Naive thymus-derived CD8-positive, alpha-beta T cell (primary cell): ENCODE measurements at regions of chr11 and their contacts with region 1.

Region 1: DNA sequence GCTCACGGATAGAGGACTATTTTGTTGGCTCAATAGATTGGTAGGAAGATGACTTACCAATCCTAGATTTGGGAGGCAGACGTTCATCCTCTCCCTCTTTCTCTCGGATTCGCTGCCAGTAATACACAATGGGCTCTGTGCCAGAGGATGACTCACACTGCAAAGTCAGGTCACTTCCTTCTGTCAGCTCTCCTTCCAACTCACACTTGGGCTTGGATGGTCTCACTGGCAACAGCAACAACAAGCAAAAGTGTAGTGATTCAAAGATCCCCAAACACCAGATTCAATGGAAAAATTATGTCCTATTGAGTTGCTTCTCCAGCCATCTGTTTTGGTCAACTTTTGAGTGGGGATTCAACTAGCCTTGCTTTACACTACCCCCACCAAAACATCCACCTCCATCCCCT is 21.7 kb upstream of the HSPA8 start:
- DNase-seq: peak in 1 of 10 donors; percentile 58
- ATAC-seq: no peak
- H3K4me3 Mint-ChIP-seq: peak overlapping the region in 2 of 10 donors; percentile 11 to 39
- H3K27ac Mint-ChIP-seq: peak overlapping the region in 7 of 10 donors; percentile 6 to 80 (median 66)
- H3K4me1 Mint-ChIP-seq: peaks cover 4 to 49% (median 33%) of the 10 kb centered on the region in 4 donors
- H3K27me3 Mint-ChIP-seq: no peaks in the 10 kb centered on the region

Region 2: DNA sequence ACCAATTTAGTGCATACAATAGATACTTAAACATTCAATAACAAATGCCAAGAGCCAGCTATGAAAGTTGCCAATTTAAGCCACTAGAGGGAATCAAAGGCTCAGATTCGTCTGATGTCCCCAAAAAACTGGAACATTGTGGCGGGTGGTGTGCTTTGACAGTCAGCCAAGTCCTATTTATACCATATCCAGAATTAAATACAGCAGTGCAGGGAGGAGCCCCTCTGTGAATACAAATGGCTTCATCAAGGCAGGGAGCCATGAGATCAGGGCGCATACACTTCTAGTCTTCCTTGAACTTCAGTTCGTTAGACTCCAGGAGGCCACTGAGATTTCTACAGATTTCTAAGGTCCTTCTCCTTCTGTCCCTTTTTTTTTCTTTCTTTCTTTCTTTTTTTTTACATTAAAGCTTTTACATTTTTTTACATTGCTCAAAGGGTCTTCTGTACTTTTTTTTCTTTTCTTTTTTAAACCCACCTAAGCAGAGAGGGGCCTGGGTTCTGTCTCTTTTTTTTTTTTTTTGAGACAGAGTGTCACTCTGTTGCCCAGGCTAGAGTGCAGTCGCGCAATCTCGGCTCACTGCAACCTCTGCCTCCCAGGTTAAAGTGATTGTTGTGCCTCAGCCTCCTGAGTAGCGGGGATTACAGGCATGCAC is 19.8 kb after region 1 on chr11:
- POLR2A ChIA-PET with region 1: interaction called, 13 read pairs
- DNase-seq: peak in 8 of 10 donors; percentile 7 to 65 (median 30)
- ATAC-seq: peak; percentile 65 to 89
- H3K4me3 Mint-ChIP-seq: no peak overlapping the region
- H3K27ac Mint-ChIP-seq: peak overlapping the region in 7 of 10 donors; percentile 8 to 89 (median 49)
- H3K4me1 Mint-ChIP-seq: peaks cover 12 to 27% (median 21%) of the 10 kb centered on the region in 4 donors
- H3K27me3 Mint-ChIP-seq: no peaks in the 10 kb centered on the region